Panc1 (cell line): ENCODE measurements at regions of chr19 and their contacts with region 1.

Region 1: DNA sequence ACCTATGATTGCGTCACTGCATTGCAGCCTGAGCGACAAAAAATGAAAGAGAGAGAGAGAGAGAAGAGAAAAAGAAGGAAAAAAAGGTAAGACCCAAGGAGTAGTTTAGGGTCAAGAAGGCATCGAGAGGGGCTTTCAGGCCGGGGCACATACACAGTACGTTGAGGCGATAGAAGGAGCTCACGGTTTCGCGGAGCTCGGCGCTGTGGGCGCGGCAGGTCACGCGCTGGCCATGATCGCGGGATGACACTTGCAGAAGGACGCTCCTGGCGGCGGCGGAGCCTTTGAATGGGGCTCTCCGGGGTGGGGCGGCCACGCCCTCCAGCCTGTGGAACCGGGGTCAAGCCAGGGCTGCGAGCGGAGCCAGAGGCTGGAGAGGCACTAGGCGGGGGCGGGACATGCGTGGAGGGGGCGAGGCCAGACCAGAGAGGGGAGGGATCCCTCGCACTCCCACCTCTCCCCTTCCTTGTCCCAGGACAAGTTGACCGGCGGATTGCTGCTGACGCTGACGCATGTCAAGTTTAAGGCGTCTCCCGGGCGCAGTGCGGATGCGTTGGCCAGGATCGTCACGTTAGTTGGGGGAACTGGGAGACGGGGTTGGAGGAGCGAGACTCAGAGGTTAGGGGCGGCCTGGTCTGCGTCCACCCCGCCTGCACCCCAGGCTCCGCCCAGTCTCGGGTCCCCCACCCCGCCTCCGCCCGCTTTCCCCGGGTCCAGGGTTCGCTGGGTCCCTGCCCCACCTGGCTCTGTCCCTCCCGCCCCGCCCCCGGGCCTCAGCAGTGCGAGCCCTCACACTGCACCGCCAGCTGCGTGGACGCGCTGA is 6.9 kb downstream of the NPHS1 start:
- DNase-seq: no peak
- ATAC-seq: peak; percentile 84
- H3K4me3 ChIP-seq: peak overlapping the region; percentile 46 to 62
- H3K27ac ChIP-seq: no peak overlapping the region
- H3K4me1 ChIP-seq: peaks cover 11% of the 10 kb centered on the region
- H3K27me3 ChIP-seq: no peaks in the 10 kb centered on the region
- CTCF ChIP-seq: no peak

Region 2: DNA sequence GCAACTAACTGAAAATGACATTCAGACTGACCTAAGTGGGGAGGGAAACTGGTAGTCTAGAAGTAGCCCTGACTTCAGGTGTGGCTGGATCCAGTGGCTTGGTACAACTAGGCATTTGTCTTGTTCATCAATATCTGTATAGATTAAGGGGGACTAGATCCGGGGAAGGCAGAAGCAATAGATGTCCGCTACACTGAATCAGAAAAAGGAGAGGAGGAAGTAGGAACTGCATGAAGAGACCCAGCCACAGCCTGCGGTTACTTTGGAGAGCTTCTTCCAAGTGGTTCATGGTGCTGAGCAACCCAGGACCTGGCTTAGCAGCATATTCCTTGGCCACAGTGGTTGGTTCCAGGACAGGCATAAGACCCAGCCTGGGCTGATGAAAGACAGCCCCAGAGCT is 22.8 kb before region 1 on chr19:
- CTCF ChIA-PET with region 1: interaction called, 10 read pairs
- POLR2A ChIA-PET with region 1: interaction called, 10 read pairs
- in situ Hi-C with region 1: no loop called
- intact Hi-C with region 1: no loop called
- DNase-seq: no peak
- ATAC-seq: peak; percentile 46; the same call in 1 of the 2 replicates
- H3K4me3 ChIP-seq: no peak overlapping the region
- H3K27ac ChIP-seq: no peak overlapping the region
- H3K4me1 ChIP-seq: no peaks in the 10 kb centered on the region
- H3K27me3 ChIP-seq: no peaks in the 10 kb centered on the region
- CTCF ChIP-seq: no peak